ENCODE measurements at regions of chr20 and their contacts with region 1.

Region 1: GRCh38 chr20:11912013-11912658 is 5.6 kb upstream of the BTBD3 start:
- DNase-seq: peak in 1 of 2 experiments; percentile 46
- H3K4me3 ChIP-seq: no peak overlapping the region
- H3K4me3 Mint-ChIP-seq: no peak overlapping the region
- H3K27ac Mint-ChIP-seq: no peak overlapping the region
- H3K4me1 ChIP-seq: 0 out of 2 replicates have a peak, but pooled peaks cover 2% of the 10 kb centered on the region
- H3K4me1 Mint-ChIP-seq: peaks cover 6% of the 10 kb centered on the region
- H3K27me3 ChIP-seq: no peaks in the 10 kb centered on the region
- H3K27me3 Mint-ChIP-seq: no peaks in the 10 kb centered on the region
- CTCF ChIP-seq: peak; percentile 41 to 65

Region 2: DNA sequence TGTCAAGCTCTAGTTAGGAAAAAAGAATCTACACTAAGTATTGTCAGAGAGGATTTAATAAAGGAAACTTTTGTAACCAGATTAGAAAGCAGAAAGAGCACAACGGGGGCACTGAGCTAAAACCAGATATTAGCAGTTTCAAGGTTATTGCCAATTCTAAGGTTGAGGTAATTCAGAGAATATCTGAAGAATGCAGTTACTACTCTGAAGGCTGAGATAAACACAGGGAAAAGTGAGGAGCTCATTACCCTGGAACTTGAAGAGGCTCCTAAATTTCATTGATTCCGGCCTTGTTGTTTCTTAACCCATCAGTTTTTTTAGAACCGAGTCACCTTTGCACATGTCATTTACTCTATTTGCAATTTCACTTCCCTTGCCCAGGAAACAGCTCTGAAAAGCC is 66.8 kb before region 1 on chr20:
- CTCF ChIA-PET with region 1: no interaction called
- POLR2A ChIA-PET with region 1: no interaction called
- intact Hi-C with region 1: no loop called
- DNase-seq: no peak
- H3K4me3 ChIP-seq: no peak overlapping the region
- H3K4me3 Mint-ChIP-seq: no peak overlapping the region
- H3K27ac Mint-ChIP-seq: no peak overlapping the region
- H3K4me1 ChIP-seq: peaks cover 9% of the 10 kb centered on the region; the same call in 1 of the 2 replicates
- H3K4me1 Mint-ChIP-seq: no peaks in the 10 kb centered on the region
- H3K27me3 ChIP-seq: no peaks in the 10 kb centered on the region
- H3K27me3 Mint-ChIP-seq: no peaks in the 10 kb centered on the region
- CTCF ChIP-seq: no peak

Region 3: DNA sequence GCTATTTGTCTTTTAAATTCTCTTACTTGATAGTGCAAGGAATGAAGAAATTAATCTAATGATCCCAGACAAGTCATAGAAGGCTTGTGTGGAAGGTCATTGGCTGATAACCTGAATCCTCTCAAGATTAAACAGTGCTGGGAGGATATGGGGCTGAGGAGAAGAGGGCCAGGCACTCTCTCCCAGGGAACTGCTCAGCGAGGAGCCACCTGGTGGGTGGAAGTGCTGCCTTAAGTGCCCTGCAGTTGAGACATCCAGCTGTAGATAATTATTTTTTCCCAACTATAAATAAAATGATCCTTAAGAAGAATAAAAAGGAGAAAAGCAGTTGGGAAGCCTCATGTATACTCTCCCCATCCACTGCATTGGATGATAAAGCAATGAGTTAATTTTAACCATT is 53.5 kb after region 1 on chr20:
- CTCF ChIA-PET with region 1: no interaction called
- POLR2A ChIA-PET with region 1: no interaction called
- intact Hi-C with region 1: loop called (anchors 5 kb)
- DNase-seq: peak in 1 of 2 experiments; percentile 11
- H3K4me3 ChIP-seq: no peak overlapping the region
- H3K4me3 Mint-ChIP-seq: no peak overlapping the region
- H3K27ac Mint-ChIP-seq: no peak overlapping the region
- H3K4me1 ChIP-seq: peaks cover 17% of the 10 kb centered on the region
- H3K4me1 Mint-ChIP-seq: peaks cover 21% of the 10 kb centered on the region
- H3K27me3 ChIP-seq: no peaks in the 10 kb centered on the region
- H3K27me3 Mint-ChIP-seq: no peaks in the 10 kb centered on the region
- CTCF ChIP-seq: peak in 1 of 2 experiments; percentile 10